Esophagus muscularis mucosa (tissue), 4 donors: ENCODE measurements at regions of chr6 and their contacts with region 1.

Region 1: GRCh38 chr6:158231551-158232315 is 63.6 kb downstream of the GTF2H5 start:
- DNase-seq: no peak
- H3K4me3 ChIP-seq: peak overlapping the region; percentile 74 to 97 (median 86)
- H3K27ac ChIP-seq: peak overlapping the region; percentile 85 to 94 (median 90)
- H3K4me1 ChIP-seq: peaks cover 10 to 25% (median 20%) of the 10 kb centered on the region in 4 donors
- H3K27me3 ChIP-seq: no peaks in the 10 kb centered on the region
- CTCF ChIP-seq: no peak
- EP300 ChIP-seq: no peak
- POLR2A ChIP-seq: no peak

Region 2: GRCh38 chr6:157607317-157608109 is 624.2 kb before region 1 on chr6:
- intact Hi-C with region 1: no loop called
- DNase-seq: no peak
- H3K4me3 ChIP-seq: no peak overlapping the region
- H3K27ac ChIP-seq: no peak overlapping the region
- H3K4me1 ChIP-seq: no peaks in the 10 kb centered on the region
- H3K27me3 ChIP-seq: no peaks in the 10 kb centered on the region
- CTCF ChIP-seq: no peak
- EP300 ChIP-seq: no peak
- POLR2A ChIP-seq: no peak

Region 3: GRCh38 chr6:158284007-158284875 is 52.5 kb after region 1 on chr6:
- intact Hi-C with region 1: loop called (anchors 5 kb)
- DNase-seq: no peak
- H3K4me3 ChIP-seq: peak overlapping the region in 1 of 4 donors; percentile 11
- H3K27ac ChIP-seq: peak overlapping the region; percentile 77 to 80 (median 78)
- H3K4me1 ChIP-seq: peaks cover 24 to 54% (median 42%) of the 10 kb centered on the region in 4 donors
- H3K27me3 ChIP-seq: no peaks in the 10 kb centered on the region
- CTCF ChIP-seq: no peak
- EP300 ChIP-seq: no peak
- POLR2A ChIP-seq: no peak

Region 4: GRCh38 chr6:158559895-158560835 is 328.4 kb after region 1 on chr6 and contains the start of gene TMEM181:
- intact Hi-C with region 1: loop called (anchors 5 kb)
- DNase-seq: peak; percentile 96
- H3K4me3 ChIP-seq: peak within 1 kb of the TSS; percentile 80 to 100 (median 98)
- H3K27ac ChIP-seq: peak within 1 kb of the TSS; percentile 86 to 98 (median 96)
- H3K4me1 ChIP-seq: peaks cover 15 to 35% (median 23%) of the 10 kb centered on the region in 4 donors
- H3K27me3 ChIP-seq: peaks cover 0 to 5% (median 0%) of the 10 kb centered on the region in 4 donors
- CTCF ChIP-seq: no peak
- EP300 ChIP-seq: no peak
- POLR2A ChIP-seq: peak; percentile 24
- total RNA-seq, gene TMEM181: 21.6 to 31.6 (median 26.0) TPM